GM12878 (cell line): ENCODE measurements at regions of chr2 and their contacts with region 1.

Region 1: DNA sequence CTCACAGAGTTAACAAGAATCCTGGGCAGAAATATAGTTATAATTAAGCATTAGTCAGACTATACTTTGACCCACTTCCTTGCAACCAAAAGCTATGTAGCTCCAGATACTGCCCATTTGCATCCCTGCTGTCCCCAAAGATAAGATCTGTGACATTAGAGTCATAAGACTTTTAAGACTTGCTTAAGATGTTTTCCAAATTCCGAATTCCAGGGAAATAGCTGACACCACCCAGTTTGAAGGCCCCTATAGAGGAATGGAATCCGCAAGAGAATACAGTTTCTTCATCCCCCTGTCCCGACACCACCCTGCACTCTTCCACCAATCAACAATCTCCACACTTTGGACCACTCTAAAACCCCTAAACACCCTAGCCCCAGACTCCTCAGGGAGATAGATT is 69.5 kb upstream of the TLK1 start:
- DNase-seq: no peak
- ATAC-seq: no peak
- H3K4me3 ChIP-seq: no peak overlapping the region
- H3K27ac ChIP-seq: no peak overlapping the region
- H3K4me1 ChIP-seq: no peaks in the 10 kb centered on the region
- H3K27me3 ChIP-seq: no peaks in the 10 kb centered on the region
- CTCF ChIP-seq: no peak
- EP300 ChIP-seq: no peak
- POLR2A ChIP-seq: no peak
- RAD21 ChIP-seq: no peak

Region 2: DNA sequence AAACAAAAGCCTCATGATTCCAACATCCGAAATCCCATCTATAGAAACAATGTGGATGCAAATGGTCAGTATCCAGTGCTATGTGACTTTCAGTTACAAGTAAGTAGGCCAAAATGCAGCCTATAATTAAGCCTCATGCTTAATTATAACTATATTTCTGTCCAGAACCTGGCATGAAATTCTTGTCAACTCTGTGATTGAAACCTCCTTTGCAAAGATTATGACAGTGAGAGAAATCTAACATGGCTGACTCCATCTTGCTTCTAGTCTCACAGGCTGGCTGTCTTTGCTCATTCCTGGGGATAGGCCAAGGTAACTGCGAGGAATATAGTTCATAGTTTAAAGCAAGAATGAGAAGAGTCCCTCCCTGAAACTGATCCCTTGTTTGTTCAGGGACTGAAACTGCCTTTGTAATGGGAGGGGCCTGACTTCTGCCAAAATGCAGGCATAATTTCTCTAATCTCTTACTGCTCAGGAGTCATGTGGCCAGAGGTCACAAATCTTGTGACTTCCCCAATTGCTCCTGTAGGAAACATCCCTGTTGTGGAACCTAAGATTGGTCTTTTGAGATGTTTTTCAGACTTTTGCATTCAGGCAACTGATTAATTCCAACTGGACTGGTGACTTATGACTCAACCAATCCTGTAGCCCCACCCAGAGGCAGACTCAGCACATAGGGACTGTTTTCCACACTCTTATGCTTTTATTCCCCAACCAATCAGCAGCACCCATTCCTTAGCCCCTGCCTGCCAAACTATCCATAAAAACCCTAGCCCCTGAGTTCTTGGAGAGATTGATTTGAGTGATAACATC is 15.0 kb after region 1 on chr2:
- CTCF ChIA-PET with region 1: interaction called, 4 read pairs
- POLR2A ChIA-PET with region 1: interaction called, 3 read pairs
- RAD21 ChIA-PET with region 1: interaction called, 4 read pairs
- SMC1A ChIA-PET with region 1: interaction called, 16 read pairs
- in situ Hi-C with region 1: no loop called
- intact Hi-C with region 1: no loop called
- DNase-seq: no peak
- ATAC-seq: no peak
- H3K4me3 ChIP-seq: no peak overlapping the region
- H3K27ac ChIP-seq: no peak overlapping the region
- H3K4me1 ChIP-seq: peaks cover 24% of the 10 kb centered on the region
- H3K27me3 ChIP-seq: no peaks in the 10 kb centered on the region
- CTCF ChIP-seq: no peak
- EP300 ChIP-seq: no peak
- POLR2A ChIP-seq: no peak
- RAD21 ChIP-seq: no peak; the same call in 1 of the 2 replicates